BJ (cell line): ENCODE measurements at regions of chr17 and their contacts with region 1.

Region 1: DNA sequence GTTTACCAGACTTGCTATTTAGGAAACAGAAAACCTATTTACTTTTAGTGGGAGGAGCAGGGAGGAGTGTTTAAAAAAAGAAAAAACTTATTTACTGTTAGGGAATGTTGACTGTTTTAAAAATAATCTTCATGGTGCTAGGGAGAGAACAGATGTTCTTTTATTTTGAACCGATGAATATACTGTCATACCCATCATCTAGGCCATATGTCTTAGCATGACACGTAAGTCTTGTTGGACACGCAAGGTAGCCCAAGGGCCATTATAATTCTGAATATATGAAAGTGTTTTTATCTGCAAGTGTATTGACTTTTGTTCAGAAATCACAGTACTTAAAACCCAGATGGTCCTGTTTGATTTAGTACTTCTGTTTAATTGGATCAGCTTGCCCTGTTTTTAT is 11.6 kb downstream of the WIPF2 start:
- DNase-seq: no peak
- H3K4me3 ChIP-seq: no peak overlapping the region
- H3K27me3 ChIP-seq: no peaks in the 10 kb centered on the region
- CTCF ChIP-seq: no peak

Region 2: DNA sequence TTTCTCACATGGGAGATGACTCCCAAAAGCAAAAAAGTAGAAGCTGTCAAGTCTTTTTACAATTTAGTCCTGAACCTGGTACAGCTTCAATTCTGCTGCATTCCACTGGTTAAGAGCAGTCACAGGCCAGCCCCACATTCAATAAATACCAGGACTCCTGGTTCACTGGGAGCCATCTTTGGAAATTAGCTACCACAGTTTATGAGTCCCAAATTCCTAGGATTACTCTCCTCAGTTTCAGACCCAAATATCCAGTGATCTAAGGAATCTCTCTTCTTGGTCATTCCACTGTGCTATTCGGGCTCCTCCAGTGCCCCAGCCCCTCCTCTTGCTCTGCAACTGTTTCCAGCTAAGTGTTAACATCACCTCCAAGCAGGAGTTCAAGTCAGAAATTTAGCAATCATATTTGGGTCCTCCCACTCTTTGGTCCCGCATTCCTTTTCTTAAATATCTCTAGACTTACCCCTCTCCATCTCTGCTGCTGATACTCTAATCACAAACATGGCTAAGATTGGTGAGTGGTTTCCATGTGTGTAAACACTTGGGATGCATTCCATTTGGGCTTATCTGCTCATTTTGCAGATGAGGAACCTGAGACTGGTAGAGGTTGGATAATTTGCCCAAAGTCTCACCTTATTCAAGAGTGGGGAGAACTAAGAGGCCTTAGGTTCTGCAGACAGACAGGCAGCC is 21.1 kb before region 1 on chr17:
- CTCF ChIA-PET with region 1: no interaction called
- POLR2A ChIA-PET with region 1: interaction called, 13 read pairs
- DNase-seq: peak; percentile 87
- H3K4me3 ChIP-seq: no peak overlapping the region
- H3K27me3 ChIP-seq: no peaks in the 10 kb centered on the region
- CTCF ChIP-seq: no peak

Region 3: DNA sequence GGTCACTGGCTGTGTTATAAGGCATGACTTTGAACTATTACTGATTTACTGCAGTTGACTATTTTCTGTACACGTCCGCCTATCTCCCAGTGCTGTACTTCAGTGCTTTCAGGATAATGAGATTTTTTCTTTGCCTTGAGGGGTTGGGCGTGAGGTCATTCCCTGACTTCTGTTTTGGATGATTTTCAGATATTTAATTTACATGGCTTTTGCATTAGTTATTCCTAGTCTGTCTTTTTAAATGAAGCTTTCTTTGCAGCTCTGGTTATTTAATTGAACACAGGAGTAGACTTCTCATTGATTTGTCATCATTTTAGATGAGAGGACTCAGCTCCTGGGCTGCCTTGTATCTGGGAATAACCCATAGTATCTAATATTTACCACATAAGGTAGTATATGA is 12.1 kb after region 1 on chr17:
- CTCF ChIA-PET with region 1: interaction called, 3 read pairs
- POLR2A ChIA-PET with region 1: interaction called, 13 read pairs
- DNase-seq: peak; percentile 42
- H3K4me3 ChIP-seq: no peak overlapping the region
- H3K27me3 ChIP-seq: no peaks in the 10 kb centered on the region
- CTCF ChIP-seq: no peak

Region 4: GRCh38 chr17:40461732-40462342 is 231.2 kb after region 1 on chr17:
- CTCF ChIA-PET with region 1: no interaction called
- POLR2A ChIA-PET with region 1: no interaction called
- DNase-seq: no peak
- H3K4me3 ChIP-seq: no peak overlapping the region
- H3K27me3 ChIP-seq: no peaks in the 10 kb centered on the region
- CTCF ChIP-seq: no peak